Activated naive CD4-positive, alpha-beta T cell treated with anti-CD3 and anti-CD28 coated beads for 36 hours (primary cell): ENCODE measurements at regions of chr15 and their contacts with region 1.

Region 1: DNA sequence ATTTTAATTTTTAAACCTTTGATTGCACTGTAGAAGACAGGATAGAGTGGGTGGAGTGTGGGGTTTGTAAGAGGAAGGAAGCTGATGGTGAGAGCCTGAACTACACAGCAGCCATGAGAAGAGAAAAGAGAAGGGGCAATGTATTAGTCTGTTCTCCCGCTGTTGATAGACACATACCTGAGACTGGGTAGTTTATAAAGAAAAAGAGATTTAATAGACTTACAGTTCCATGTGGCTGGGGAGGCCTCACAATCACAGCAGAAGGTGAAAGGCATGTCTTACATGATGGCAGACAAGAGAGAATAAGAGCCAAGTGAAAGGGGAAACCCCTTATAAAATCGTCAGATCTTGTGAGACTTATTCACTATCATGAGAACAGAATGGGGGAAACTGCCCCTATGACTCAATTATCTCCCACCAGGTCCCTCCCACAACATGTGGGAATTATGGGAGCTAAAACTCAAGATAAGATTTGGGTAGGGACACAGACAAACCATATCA is 37.3 kb downstream of the STARD5 start:
- DNase-seq: peak; percentile 52
- H3K4me3 Mint-ChIP-seq: peak overlapping the region; percentile 75
- H3K27ac Mint-ChIP-seq: peak overlapping the region; percentile 95
- H3K4me1 Mint-ChIP-seq: peaks cover 83% of the 10 kb centered on the region
- H3K27me3 Mint-ChIP-seq: no peaks in the 10 kb centered on the region

Region 2: DNA sequence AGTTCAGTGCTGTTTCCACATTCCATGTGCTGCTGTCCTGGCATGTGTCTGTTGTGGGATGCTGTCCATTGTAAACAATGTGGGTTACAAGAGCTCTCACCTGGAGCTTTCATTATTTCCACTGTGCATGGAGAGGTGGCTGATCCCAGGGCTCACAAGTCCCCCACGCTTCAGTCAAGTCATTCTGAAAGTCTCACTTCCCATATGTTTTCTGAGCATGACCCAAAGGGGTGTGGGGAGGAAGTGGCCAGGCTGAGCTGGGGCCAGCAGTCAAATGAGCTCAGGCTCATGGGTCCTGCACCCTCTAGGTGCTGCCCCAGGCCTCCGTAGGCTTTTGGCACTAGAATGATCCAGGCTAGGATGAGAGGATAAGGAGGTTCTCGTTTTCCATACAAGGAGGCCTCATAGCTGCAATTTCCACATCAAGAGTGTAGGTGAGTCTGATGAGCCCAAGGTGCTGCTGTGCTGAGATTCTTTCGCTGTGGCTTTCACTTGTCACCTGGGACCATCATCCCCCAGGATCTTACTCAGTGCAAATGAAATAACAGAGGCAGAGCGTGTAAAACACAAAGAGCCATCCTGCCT is 15.2 kb after region 1 on chr15:
- CTCF ChIA-PET with region 1: interaction called, 14 read pairs
- intact Hi-C with region 1: loop called (anchors 2 kb)
- DNase-seq: peak; percentile 69
- H3K4me3 Mint-ChIP-seq: peak overlapping the region; percentile 93
- H3K27ac Mint-ChIP-seq: peak overlapping the region; percentile 99
- H3K4me1 Mint-ChIP-seq: peaks cover 64% of the 10 kb centered on the region
- H3K27me3 Mint-ChIP-seq: no peaks in the 10 kb centered on the region

Region 3: DNA sequence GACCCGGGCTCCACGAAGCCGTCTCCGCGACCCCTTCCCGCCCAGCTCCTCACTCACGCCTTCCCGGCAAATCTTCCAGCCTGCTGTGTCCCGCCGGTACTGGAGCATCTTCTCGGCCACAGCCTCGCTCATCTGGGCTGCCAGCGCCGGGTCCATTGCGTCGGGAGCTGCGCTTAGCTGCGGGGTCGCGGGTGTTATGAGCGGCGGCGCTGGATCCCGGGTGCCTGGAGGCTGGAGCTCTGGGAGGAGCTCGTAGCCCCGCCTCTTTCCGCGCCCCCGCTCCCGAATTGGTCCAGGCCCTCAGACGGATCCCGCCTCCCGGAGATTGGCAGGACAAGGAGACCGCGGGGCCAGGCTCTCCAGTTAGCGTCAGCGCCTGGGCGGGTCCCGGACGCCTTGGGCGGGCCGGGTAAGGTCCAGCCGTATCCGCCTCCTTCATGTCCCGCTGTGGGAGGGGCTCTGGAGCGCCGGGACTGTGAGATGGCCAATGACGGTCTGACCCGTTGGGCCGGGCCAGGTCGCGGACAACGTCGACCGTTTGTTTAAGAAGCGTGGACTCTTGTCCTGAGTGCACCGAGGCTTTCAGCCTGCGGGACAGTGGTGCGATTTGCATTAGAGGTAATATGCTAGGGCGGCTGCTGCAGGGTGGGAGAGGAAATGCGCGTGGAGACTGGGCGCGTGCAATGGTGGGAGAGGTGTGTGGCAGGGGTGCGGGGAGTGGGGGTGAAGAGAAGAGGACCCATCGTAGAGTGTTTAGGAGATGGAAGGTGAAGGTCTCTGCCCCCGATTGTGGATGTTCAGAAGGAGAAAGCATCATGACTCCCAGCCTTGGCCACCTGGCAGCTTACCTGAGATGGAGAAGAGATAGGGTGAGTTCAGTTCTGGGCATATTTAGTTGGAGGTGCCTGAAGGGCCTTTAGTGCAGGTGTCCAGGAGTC is 37.5 kb after region 1 on chr15 and contains the start of gene STARD5:
- CTCF ChIA-PET with region 1: interaction called, 3 read pairs
- intact Hi-C with region 1: loop called (anchors 1 kb)
- DNase-seq: peak; percentile 98
- H3K4me3 Mint-ChIP-seq: peak within 1 kb of the TSS; percentile 98
- H3K27ac Mint-ChIP-seq: peak within 1 kb of the TSS; percentile 78
- H3K4me1 Mint-ChIP-seq: peaks cover 38% of the 10 kb centered on the region
- H3K27me3 Mint-ChIP-seq: no peaks in the 10 kb centered on the region
- total RNA-seq, gene STARD5: 10.1 to 11.7 TPM

Region 4: GRCh38 chr15:81346611-81347010 is 59.9 kb after region 1 on chr15:
- CTCF ChIA-PET with region 1: no interaction called
- intact Hi-C with region 1: no loop called
- DNase-seq: no peak
- H3K4me3 Mint-ChIP-seq: no peak overlapping the region
- H3K27ac Mint-ChIP-seq: no peak overlapping the region
- H3K4me1 Mint-ChIP-seq: peaks cover 10% of the 10 kb centered on the region
- H3K27me3 Mint-ChIP-seq: no peaks in the 10 kb centered on the region

Region 5: GRCh38 chr15:82398785-82399184 is 1112.1 kb after region 1 on chr15:
- CTCF ChIA-PET with region 1: no interaction called
- intact Hi-C with region 1: loop called (anchors 10 kb)
- DNase-seq: no peak
- H3K4me3 Mint-ChIP-seq: no peak overlapping the region
- H3K27ac Mint-ChIP-seq: no peak overlapping the region
- H3K4me1 Mint-ChIP-seq: peaks cover 4% of the 10 kb centered on the region
- H3K27me3 Mint-ChIP-seq: no peaks in the 10 kb centered on the region